ENCODE measurements at regions of chr9 and their contacts with region 1.

Region 1: DNA sequence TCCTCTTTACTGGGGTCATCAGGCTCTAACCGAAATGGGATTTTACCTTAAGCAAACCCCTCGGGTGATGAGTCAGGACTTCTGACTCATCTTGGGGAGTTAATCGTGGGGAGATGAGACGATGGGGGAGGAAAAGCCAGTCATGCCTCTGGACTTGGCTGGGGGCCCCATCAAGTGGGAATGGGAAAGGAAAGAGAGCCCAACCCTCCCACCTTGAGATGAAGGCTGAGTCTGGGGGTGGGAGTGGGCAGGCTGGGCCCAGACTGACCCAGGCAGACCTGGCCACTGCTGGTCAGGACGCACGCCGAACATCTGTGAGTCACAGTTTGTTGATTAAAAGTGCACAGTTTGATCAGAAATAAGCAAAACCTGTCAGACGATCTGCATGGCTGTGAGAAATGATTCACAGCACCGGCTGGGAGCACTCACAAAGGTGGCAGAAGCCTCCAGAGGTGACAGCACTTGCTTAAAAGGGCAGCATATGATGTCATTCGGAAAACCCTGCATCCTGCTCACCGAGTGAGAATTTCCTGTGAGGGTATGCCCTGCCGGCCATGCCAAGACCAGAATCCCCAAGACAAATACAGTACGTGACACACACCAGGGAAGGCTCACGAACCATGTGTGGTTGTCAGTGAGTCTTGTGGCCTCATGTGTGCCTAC is 50.0 kb upstream of the SLC25A51 start:
- DNase-seq: peak; percentile 70 to 95
- H3K4me3 ChIP-seq: no peak overlapping the region
- H3K27ac ChIP-seq: peak overlapping the region; percentile 76
- H3K4me1 ChIP-seq: peaks cover 29% of the 10 kb centered on the region
- H3K27me3 ChIP-seq: no peaks in the 10 kb centered on the region
- CTCF ChIP-seq: no peak

Region 2: DNA sequence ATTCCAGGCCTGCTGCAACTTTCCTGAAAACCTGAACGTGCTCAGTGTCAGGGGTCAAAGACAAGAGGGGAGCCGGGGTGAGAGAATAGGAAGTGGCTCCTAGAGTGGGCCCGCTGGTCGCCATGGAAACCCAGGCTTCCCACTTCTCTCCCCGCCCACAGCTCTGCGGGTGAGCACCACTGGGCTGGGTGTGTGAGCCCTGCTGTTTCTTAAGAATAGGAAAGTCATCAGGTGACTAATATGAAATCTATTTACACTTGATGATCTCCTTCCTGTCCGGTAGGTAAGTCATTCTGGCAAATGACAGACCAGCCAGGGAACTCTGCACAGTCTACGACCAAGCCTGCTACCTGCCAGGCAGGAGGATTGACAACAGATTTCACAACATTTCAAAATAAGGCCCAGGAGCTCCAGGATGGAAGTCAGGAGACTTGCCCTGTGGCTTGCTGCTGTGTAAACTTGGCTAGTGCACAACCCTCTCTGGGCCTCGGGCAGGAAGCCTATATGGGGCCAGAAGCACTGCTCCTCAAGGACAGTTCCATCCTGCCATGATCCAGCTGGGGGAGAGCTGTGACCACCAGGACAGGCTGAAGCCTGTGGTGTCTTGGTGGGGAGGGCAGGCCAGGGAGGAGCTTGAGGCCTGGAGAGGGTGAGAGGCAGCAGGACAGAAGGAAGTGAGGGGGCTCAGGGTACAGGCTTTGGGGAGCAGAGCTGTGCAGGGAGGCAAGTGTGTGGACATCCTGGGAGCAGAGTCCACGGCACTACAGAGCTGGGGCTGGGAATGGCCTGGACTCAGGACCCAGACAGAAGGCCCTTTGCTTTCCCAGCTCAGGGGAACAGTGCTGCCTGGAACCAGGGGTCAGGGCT is 54.5 kb after region 1 on chr9:
- CTCF ChIA-PET with region 1: no interaction called
- POLR2A ChIA-PET with region 1: no interaction called
- intact Hi-C with region 1: loop called (anchors 1 kb)
- DNase-seq: peak; percentile 74 to 96
- H3K4me3 ChIP-seq: no peak overlapping the region
- H3K27ac ChIP-seq: peak overlapping the region; percentile 69
- H3K4me1 ChIP-seq: peaks cover 45% of the 10 kb centered on the region
- H3K27me3 ChIP-seq: no peaks in the 10 kb centered on the region
- CTCF ChIP-seq: no peak